Common myeloid progenitor, CD34-positive (primary cell): ENCODE measurements at regions of chr21 and their contacts with region 1.

Region 1: DNA sequence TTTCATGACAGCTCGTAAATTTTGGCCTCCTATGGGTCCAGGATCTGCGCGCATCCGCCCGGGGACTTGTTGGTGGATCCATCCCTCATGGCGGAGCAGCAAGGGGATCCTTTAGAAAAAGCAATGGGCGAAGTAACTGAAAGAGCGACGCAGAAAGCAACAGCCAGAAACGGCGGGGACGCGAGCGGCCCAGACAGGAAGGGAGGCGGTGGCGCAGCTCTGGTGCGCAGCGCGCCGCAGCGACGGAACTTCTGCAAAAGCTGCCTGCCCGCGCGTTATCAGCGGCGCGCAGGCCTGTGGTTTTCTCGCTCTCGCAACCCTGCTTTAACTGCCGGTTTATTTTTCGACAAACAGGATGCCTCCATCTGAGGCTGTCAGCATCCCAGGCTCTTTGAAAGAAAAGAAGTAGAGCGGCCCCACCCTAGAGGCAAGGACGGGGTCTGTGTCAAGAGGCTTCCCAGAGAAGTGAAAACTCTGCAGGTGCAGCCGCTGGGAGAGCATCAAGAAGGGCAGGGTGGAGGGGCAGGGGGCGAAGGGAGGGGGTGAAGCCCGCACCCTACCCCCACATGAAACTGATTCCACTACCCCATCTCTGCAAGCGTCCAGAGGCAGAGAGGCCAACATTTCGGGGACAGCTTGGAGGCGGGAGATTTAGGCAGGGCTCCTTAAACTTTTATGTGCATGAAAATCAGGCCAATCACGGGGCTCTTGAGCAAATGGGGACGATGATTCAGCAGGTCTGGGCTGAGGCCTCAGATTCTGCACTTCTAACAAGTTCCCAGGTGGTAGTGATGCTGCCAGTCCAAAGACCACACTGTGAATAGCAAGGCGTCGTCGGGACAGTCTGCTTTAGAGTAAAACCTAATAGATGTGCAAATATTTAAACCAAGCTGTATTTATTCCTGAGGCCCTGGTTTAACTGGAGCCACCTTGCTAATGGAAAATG is 22.2 kb downstream of the RUNX1 start:
- DNase-seq: peak; percentile 98 to 100 (median 99)
- H3K4me3 ChIP-seq: peak overlapping the region in 6 of 7 experiments; percentile 33 to 66 (median 43)
- H3K27ac ChIP-seq: peak overlapping the region; percentile 90 to 93
- H3K4me1 ChIP-seq: peaks cover 33 to 89% (median 71%) of the 10 kb centered on the region in 4 experiments
- H3K27me3 ChIP-seq: no peaks in the 10 kb centered on the region

Region 2: GRCh38 chr21:34908419-34909055 is 118.4 kb before region 1 on chr21:
- CTCF ChIA-PET with region 1: interaction called, 4 read pairs
- POLR2A ChIA-PET with region 1: interaction called, 10 read pairs
- DNase-seq: peak; percentile 97 to 99 (median 99)
- H3K4me3 ChIP-seq: peak overlapping the region in 4 of 7 experiments; percentile 27 to 68 (median 63)
- H3K27ac ChIP-seq: peak overlapping the region; percentile 94 to 99
- H3K4me1 ChIP-seq: peaks cover 70 to 98% (median 84%) of the 10 kb centered on the region in 4 experiments
- H3K27me3 ChIP-seq: no peaks in the 10 kb centered on the region

Region 3: DNA sequence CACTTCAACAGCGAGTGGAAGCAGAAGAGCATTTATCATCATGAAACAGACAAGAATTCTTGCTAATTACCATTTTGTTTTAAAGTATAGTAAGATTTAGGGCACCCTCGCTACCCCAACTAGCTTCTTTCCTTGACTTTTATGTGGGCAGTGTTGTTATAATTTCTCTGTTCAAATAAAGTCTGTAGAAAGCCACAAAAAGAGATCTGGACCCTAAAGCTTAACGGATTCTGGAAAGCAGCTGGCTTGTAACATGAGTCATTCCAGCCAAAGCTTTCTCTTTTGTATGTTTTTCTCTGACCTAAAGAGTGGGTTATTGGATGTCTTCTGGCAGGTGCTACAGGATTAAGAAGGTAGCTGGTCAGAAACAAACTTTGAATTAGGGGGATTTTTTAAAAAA is 15.2 kb before region 1 on chr21:
- CTCF ChIA-PET with region 1: interaction called, 9 read pairs
- POLR2A ChIA-PET with region 1: interaction called, 13 read pairs
- DNase-seq: peak in 2 of 3 donors; percentile 80 to 85
- H3K4me3 ChIP-seq: peak overlapping the region in 2 of 7 experiments; percentile 12 to 44
- H3K27ac ChIP-seq: peak overlapping the region; percentile 11 to 72
- H3K4me1 ChIP-seq: peaks cover 18 to 95% (median 34%) of the 10 kb centered on the region in 4 experiments
- H3K27me3 ChIP-seq: no peaks in the 10 kb centered on the region